H1 (cell line): ENCODE measurements at regions of chr5 and their contacts with region 1.

Region 1: DNA sequence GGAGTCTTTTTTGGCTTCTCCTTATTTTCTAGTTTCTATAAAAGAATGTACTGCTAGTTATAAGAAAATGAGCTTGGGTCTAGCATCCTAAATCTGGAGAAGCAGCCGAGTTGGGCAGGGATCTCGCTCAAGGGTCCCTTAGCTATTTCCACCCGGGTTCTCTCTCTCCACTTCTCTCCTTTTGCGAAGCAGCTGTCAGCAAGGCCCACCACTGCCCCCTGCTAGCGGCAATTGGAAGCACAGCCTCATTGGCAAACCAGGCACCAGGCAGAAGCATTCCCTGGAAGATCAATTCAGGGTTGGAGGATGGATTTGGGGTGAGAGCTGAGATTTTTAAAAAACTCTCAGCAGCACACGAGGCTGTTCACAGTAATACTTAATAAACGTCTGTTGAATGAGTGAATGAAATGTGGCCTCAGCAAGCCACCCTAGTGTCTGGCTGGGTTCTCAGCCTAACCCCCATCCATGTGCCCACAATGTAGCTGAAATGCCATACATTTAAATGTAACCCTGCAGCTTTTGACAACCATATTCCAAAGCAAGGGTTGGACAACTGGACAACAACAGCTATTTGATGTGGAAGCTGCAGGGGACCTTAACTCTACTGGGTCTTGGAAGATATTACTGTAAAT is 34.6 kb upstream of the TNIP1 start:
- DNase-seq: peak; percentile 58 to 90
- H3K4me3 ChIP-seq: no peak overlapping the region
- H3K27ac ChIP-seq: no peak overlapping the region
- H3K4me1 ChIP-seq: no peaks in the 10 kb centered on the region
- H3K27me3 ChIP-seq: no peaks in the 10 kb centered on the region
- CTCF ChIP-seq: peak; percentile 88 to 94 (median 92)
- EP300 ChIP-seq: no peak
- POLR2A ChIP-seq: no peak
- RAD21 ChIP-seq: peak; percentile 91

Region 2: GRCh38 chr5:151002250-151002649 is 113.1 kb before region 1 on chr5:
- CTCF ChIA-PET with region 1: interaction called, 30 read pairs
- POLR2A ChIA-PET with region 1: no interaction called
- DNase-seq: peak in 1 of 2 experiments; percentile 42
- H3K4me3 ChIP-seq: no peak overlapping the region
- H3K27ac ChIP-seq: no peak overlapping the region
- H3K4me1 ChIP-seq: peaks cover 0 to 3% (median 0%) of the 10 kb centered on the region in 4 experiments; a peak in 1 of 7 replicates
- H3K27me3 ChIP-seq: no peaks in the 10 kb centered on the region
- CTCF ChIP-seq: peak in 2 of 3 experiments; percentile 37 to 57; a peak in 2 of 4 replicates
- EP300 ChIP-seq: no peak
- POLR2A ChIP-seq: no peak
- RAD21 ChIP-seq: peak; percentile 73 to 78

Region 3: DNA sequence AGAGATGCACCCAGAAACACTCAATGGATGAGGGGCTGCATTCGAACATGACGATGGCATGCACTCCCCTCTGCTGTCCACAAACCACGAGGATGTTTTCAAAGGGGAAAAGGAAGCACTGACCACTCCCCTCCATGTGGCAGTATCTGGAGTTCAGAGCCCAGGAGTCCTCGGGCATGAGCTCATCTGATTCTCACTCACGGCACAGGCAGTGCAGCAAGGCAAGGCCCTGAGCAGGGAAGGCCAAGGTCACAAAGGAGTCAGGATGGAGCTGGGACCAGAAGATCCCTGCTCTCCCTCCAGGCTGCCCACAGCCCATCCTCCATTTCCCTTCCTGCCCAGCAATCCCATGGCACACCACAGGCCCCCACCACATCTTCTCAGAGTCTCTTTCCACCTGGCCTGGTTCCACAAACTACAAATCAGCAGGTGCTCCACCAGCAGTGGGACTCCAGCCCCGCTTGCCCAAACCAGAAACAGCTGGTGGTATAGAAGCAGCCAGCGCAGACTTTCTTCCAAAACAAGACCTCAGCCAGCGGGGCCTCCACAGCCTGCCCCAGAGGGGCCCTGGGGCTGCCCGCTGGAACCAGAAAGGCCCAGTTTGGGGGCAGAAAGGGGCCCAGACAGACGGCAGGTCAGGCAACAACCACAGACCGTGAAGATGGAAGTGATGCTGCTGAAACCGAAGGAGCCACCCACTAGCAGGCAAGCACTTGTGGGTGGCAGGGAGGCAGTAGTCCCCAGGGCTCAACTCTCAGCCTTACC is 46.8 kb before region 1 on chr5:
- CTCF ChIA-PET with region 1: interaction called, 172 read pairs
- POLR2A ChIA-PET with region 1: no interaction called
- DNase-seq: no peak
- H3K4me3 ChIP-seq: no peak overlapping the region
- H3K27ac ChIP-seq: no peak overlapping the region; the same call in 1 of the 2 replicates
- H3K4me1 ChIP-seq: peaks cover 0 to 10% (median 5%) of the 10 kb centered on the region in 4 experiments; a peak in 4 of 7 replicates
- H3K27me3 ChIP-seq: no peaks in the 10 kb centered on the region
- CTCF ChIP-seq: no peak
- EP300 ChIP-seq: no peak
- POLR2A ChIP-seq: no peak
- RAD21 ChIP-seq: no peak

Region 4: GRCh38 chr5:151086905-151087360 is 28.5 kb before region 1 on chr5:
- CTCF ChIA-PET with region 1: interaction called, 33 read pairs
- POLR2A ChIA-PET with region 1: interaction called, 4 read pairs
- DNase-seq: no peak
- H3K4me3 ChIP-seq: no peak overlapping the region
- H3K27ac ChIP-seq: no peak overlapping the region
- H3K4me1 ChIP-seq: peaks cover 0 to 4% (median 1%) of the 10 kb centered on the region in 4 experiments; a peak in 4 of 7 replicates
- H3K27me3 ChIP-seq: no peaks in the 10 kb centered on the region; a peak in 2 of 7 replicates
- CTCF ChIP-seq: no peak
- EP300 ChIP-seq: no peak
- POLR2A ChIP-seq: no peak
- RAD21 ChIP-seq: no peak

Region 5: GRCh38 chr5:151101151-151101550 is 14.2 kb before region 1 on chr5:
- CTCF ChIA-PET with region 1: interaction called, 96 read pairs
- POLR2A ChIA-PET with region 1: interaction called, 3 read pairs
- DNase-seq: no peak
- H3K4me3 ChIP-seq: no peak overlapping the region
- H3K27ac ChIP-seq: no peak overlapping the region
- H3K4me1 ChIP-seq: peaks cover 0 to 2% (median 0%) of the 10 kb centered on the region in 4 experiments; a peak in 1 of 7 replicates
- H3K27me3 ChIP-seq: no peaks in the 10 kb centered on the region
- CTCF ChIP-seq: no peak
- EP300 ChIP-seq: no peak
- POLR2A ChIP-seq: no peak
- RAD21 ChIP-seq: no peak

Region 6: GRCh38 chr5:151134238-151134637 is 18.8 kb after region 1 on chr5:
- CTCF ChIA-PET with region 1: interaction called, 40 read pairs
- POLR2A ChIA-PET with region 1: no interaction called
- DNase-seq: no peak
- H3K4me3 ChIP-seq: no peak overlapping the region
- H3K27ac ChIP-seq: no peak overlapping the region
- H3K4me1 ChIP-seq: no peaks in the 10 kb centered on the region
- H3K27me3 ChIP-seq: no peaks in the 10 kb centered on the region; a peak in 1 of 7 replicates
- CTCF ChIP-seq: no peak
- EP300 ChIP-seq: no peak
- POLR2A ChIP-seq: no peak
- RAD21 ChIP-seq: no peak

Region 7: GRCh38 chr5:151150471-151151262 is 35.3 kb after region 1 on chr5:
- CTCF ChIA-PET with region 1: interaction called, 810 read pairs
- POLR2A ChIA-PET with region 1: no interaction called
- DNase-seq: no peak
- H3K4me3 ChIP-seq: no peak overlapping the region
- H3K27ac ChIP-seq: no peak overlapping the region
- H3K4me1 ChIP-seq: peaks cover 0 to 9% (median 4%) of the 10 kb centered on the region in 4 experiments; a peak in 4 of 7 replicates
- H3K27me3 ChIP-seq: no peaks in the 10 kb centered on the region
- CTCF ChIP-seq: no peak
- EP300 ChIP-seq: no peak
- POLR2A ChIP-seq: 0 out of 3 replicates have a peak, but pooled peaks of 1 of the 2 experiments have one; percentile 28
- RAD21 ChIP-seq: no peak

Region 8: GRCh38 chr5:151257731-151258181 is 142.4 kb after region 1 on chr5:
- CTCF ChIA-PET with region 1: no interaction called
- POLR2A ChIA-PET with region 1: no interaction called
- DNase-seq: no peak
- H3K4me3 ChIP-seq: no peak overlapping the region
- H3K27ac ChIP-seq: no peak overlapping the region
- H3K4me1 ChIP-seq: peaks cover 0 to 7% (median 3%) of the 10 kb centered on the region in 4 experiments; a peak in 3 of 7 replicates
- H3K27me3 ChIP-seq: no peaks in the 10 kb centered on the region
- CTCF ChIP-seq: no peak
- EP300 ChIP-seq: no peak
- POLR2A ChIP-seq: no peak
- RAD21 ChIP-seq: no peak

Region 9: DNA sequence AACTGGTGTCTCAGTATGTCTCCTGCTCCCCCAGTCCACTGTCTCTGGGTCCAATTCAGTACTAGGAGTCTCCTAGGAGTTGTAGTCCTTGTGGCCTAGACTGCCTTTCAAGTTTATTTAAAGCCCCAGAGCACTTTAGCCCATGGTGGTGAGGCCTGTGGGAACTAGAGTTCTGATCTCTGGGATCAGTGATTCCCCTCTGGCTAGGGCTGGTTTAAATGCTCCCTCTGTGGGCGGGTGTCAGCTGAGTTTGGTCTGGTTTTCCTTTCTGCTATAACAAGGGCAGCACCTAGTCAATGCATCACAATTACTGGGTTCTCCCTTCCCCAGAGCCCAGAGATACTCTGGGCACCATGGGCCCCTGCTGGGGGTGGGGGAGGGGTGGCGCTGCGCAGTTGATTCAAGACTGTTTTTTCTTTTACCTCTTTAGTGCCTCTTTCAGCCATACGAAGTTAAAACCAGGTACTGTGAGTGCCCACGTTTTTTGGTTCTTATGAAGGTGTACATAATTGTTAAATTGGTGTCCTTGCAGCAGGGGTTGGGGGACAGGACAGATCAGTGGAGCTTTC is 197.4 kb after region 1 on chr5:
- CTCF ChIA-PET with region 1: no interaction called
- POLR2A ChIA-PET with region 1: no interaction called
- DNase-seq: peak in 1 of 2 experiments; percentile 35
- H3K4me3 ChIP-seq: no peak overlapping the region
- H3K27ac ChIP-seq: no peak overlapping the region
- H3K4me1 ChIP-seq: no peaks in the 10 kb centered on the region
- H3K27me3 ChIP-seq: no peaks in the 10 kb centered on the region
- CTCF ChIP-seq: no peak
- EP300 ChIP-seq: no peak
- POLR2A ChIP-seq: no peak
- RAD21 ChIP-seq: no peak